ENCODE measurements at regions of chr10 and their contacts with region 1.

Region 1: DNA sequence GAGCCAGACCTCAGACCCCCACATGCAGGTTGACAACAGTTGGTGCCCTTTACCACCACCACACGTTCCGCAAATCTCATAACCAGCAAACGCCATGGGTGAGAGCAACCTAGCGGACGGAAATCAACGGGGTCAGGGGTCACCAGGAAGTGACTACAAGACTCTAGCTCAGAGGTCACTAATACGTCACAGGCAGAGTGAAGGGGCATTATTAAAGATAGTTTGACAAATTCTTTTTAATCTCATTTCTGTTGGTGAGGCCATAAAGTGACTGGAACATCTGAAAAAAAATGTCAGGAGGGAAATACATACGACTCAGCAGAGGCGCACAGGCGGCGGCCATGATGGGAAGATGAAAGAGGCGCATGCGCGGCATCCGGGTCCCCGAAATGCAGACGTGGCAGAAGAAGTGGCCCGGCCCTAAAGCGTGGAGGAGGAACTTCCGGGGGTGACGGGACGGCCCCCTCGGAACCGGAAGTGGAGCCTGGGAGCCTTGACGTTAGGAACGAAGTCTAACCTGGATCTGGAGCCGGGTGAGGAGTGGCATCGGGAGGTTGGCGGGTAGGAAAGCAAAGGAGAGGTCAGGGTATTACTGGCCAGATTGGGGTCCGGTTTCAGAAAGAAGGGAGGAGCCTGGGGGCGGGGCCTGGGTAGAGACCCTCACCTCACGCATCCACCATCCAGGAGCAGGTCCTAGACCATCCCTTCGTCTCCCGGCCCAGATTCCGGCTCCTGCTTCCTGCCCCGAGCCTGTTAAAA is at the start of gene SEC24C:
- DNase-seq: peak; percentile 99
- ATAC-seq: peak; percentile 94
- H3K4me3 ChIP-seq: peak within 1 kb of the TSS; percentile 89 to 99 (median 95)
- H3K4me3 Mint-ChIP-seq: peak within 1 kb of the TSS; percentile 100
- H3K27ac ChIP-seq: peak within 1 kb of the TSS; percentile 88 to 99
- H3K27ac Mint-ChIP-seq: peak within 1 kb of the TSS; percentile 100
- H3K4me1 ChIP-seq: peaks cover 18 to 24% of the 10 kb centered on the region in 2 donors
- H3K4me1 Mint-ChIP-seq: peaks cover 35% of the 10 kb centered on the region
- H3K27me3 ChIP-seq: no peaks in the 10 kb centered on the region
- H3K27me3 Mint-ChIP-seq: no peaks in the 10 kb centered on the region
- CTCF ChIP-seq: no peak
- total RNA-seq, gene SEC24C: 78.7 and 80.5 TPM in 2 replicates

Region 2: GRCh38 chr10:73167783-73168464 is 576.2 kb before region 1 on chr10 and contains the starts of genes ECD and FAM149B1:
- CTCF ChIA-PET with region 1: no interaction called
- POLR2A ChIA-PET with region 1: no interaction called
- intact Hi-C with region 1: loop called (anchors 5 kb)
- DNase-seq: peak; percentile 95
- ATAC-seq: peak; percentile 97
- H3K4me3 ChIP-seq: peak within 1 kb of the TSS; percentile 72 to 99 (median 98)
- H3K4me3 Mint-ChIP-seq: peak within 1 kb of the TSS; percentile 100
- H3K27ac ChIP-seq: peak within 1 kb of the TSS; percentile 90
- H3K27ac Mint-ChIP-seq: peak within 1 kb of the TSS; percentile 97
- H3K4me1 ChIP-seq: peaks cover 18 to 19% of the 10 kb centered on the region in 2 donors
- H3K4me1 Mint-ChIP-seq: peaks cover 37% of the 10 kb centered on the region
- H3K27me3 ChIP-seq: no peaks in the 10 kb centered on the region
- H3K27me3 Mint-ChIP-seq: no peaks in the 10 kb centered on the region
- CTCF ChIP-seq: no peak
- total RNA-seq, gene ECD: 37.1 and 38.8 TPM in 2 replicates
- total RNA-seq, gene FAM149B1: 22.5 and 25.9 TPM in 2 replicates

Region 3: GRCh38 chr10:73625884-73626752 is 118.0 kb before region 1 on chr10:
- CTCF ChIA-PET with region 1: no interaction called
- POLR2A ChIA-PET with region 1: no interaction called
- intact Hi-C with region 1: loop called (anchors 1 kb)
- DNase-seq: peak; percentile 96
- ATAC-seq: peak; percentile 91
- H3K4me3 ChIP-seq: peak overlapping the region; percentile 71 to 97 (median 90)
- H3K4me3 Mint-ChIP-seq: peak overlapping the region; percentile 98
- H3K27ac ChIP-seq: peak overlapping the region; percentile 70 to 92
- H3K27ac Mint-ChIP-seq: peak overlapping the region; percentile 97
- H3K4me1 ChIP-seq: peaks cover 11% of the 10 kb centered on the region in 2 donors
- H3K4me1 Mint-ChIP-seq: peaks cover 16% of the 10 kb centered on the region
- H3K27me3 ChIP-seq: no peaks in the 10 kb centered on the region
- H3K27me3 Mint-ChIP-seq: no peaks in the 10 kb centered on the region
- CTCF ChIP-seq: no peak

Region 4: DNA sequence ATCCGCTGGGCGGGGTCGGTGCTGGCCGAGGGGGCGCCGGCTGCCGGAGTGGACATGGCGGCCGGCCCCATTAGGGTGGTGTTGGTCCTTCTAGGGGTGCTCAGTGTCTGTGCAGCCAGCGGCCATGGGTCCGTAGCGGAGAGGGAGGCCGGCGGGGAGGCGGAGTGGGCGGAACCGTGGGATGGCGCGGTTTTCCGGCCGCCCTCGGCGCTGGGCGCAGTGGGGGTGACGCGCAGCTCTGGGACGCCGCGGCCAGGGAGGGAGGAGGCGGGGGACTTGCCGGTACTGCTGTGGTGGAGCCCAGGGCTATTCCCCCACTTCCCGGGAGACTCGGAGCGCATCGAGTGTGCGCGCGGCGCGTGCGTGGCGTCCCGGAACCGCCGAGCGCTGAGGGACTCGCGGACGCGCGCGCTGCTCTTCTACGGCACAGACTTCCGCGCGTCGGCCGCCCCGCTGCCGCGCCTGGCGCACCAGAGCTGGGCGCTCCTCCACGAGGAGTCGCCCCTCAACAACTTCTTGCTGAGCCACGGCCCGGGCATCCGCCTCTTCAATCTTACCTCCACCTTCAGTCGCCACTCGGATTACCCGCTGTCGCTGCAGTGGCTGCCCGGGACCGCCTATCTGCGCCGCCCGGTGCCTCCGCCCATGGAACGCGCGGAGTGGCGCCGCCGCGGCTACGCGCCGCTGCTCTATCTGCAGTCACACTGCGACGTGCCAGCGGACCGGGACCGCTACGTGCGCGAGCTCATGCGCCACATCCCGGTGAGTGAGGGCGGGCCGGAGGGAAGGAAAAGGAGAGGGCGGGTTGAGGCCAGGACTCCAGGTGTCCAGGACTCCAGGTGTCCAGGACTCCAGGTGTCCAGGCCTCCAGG is 28.4 kb after region 1 on chr10:
- CTCF ChIA-PET with region 1: interaction called, 9 read pairs
- POLR2A ChIA-PET with region 1: interaction called, 15 read pairs
- intact Hi-C with region 1: loop called (anchors 1 kb)
- DNase-seq: peak; percentile 91
- ATAC-seq: peak; percentile 66
- H3K4me3 ChIP-seq: peak overlapping the region; percentile 66 to 94 (median 89)
- H3K4me3 Mint-ChIP-seq: peak overlapping the region; percentile 97
- H3K27ac ChIP-seq: peak overlapping the region; percentile 85 to 93
- H3K27ac Mint-ChIP-seq: peak overlapping the region; percentile 98
- H3K4me1 ChIP-seq: peaks cover 30 to 47% of the 10 kb centered on the region in 2 donors
- H3K4me1 Mint-ChIP-seq: peaks cover 63% of the 10 kb centered on the region
- H3K27me3 ChIP-seq: no peaks in the 10 kb centered on the region
- H3K27me3 Mint-ChIP-seq: no peaks in the 10 kb centered on the region
- CTCF ChIP-seq: no peak

Region 5: DNA sequence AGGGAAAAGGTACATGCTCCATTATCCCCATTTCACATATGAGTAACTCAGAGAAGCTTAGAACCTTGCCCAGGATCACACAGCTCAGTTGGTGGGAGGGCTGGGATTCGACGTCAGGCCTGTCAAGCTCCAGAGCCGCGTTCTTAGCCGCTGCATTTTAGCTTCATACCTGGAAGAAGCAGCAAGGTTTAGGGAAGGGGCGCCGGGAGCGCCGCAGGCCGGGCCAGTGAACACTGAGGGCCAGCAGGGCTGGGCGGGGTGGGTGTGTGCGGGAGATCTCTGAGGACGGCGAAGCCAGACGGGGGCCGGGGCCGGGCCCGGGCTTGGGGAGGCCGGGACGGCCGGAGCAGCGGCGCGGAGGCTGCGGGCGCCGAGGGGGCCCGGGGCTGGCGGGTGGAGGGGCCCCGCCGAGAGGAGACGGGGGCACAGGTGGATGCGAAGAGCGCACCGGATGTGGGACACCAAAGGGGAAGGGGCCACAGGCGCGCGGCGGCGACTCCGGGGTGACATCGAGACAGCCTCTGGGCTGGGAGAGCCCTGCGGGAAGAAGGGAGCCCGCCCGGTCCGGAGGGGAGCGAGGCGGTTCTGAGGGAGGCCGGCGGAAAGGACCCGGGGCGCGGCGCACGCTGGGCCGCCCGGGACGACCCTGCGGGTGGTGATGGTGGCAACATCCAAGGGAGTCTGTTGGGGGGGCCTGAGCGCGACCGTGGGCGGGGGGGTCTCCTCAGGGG is 66.8 kb after region 1 on chr10:
- CTCF ChIA-PET with region 1: no interaction called
- POLR2A ChIA-PET with region 1: no interaction called
- intact Hi-C with region 1: loop called (anchors 1 kb)
- DNase-seq: no peak
- ATAC-seq: peak; percentile 7
- H3K4me3 ChIP-seq: peak overlapping the region; percentile 58 to 83 (median 76)
- H3K4me3 Mint-ChIP-seq: peak overlapping the region; percentile 88
- H3K27ac ChIP-seq: peak overlapping the region; percentile 52 to 94
- H3K27ac Mint-ChIP-seq: peak overlapping the region; percentile 93
- H3K4me1 ChIP-seq: peaks cover 4 to 26% of the 10 kb centered on the region in 2 donors
- H3K4me1 Mint-ChIP-seq: peaks cover 33% of the 10 kb centered on the region
- H3K27me3 ChIP-seq: no peaks in the 10 kb centered on the region
- H3K27me3 Mint-ChIP-seq: no peaks in the 10 kb centered on the region
- CTCF ChIP-seq: no peak